Activated T-helper 1 cell treated with anti-CD3 and anti-CD28 coated beads, Interleukin-12 subunit alpha, Interleukin-12 subunit beta, Interleukin-2, Interleukin-4 antibody, amounts not matched to agents 30 ng/mL and 10 ng/mL and 1 ng/mL, durations not matched to agents 14 hours and 24 hours and 36 hours (primary cell): ENCODE measurements at regions of chr17 and their contacts with region 1.

Region 1: GRCh38 chr17:75024686-75025397 is 12.4 kb downstream of the MRPL58 start:
- DNase-seq: no peak
- H3K4me3 Mint-ChIP-seq: peak overlapping the region; percentile 41
- H3K27ac Mint-ChIP-seq: no peak overlapping the region
- H3K4me1 Mint-ChIP-seq: no peaks in the 10 kb centered on the region
- H3K27me3 Mint-ChIP-seq: no peaks in the 10 kb centered on the region

Region 2: GRCh38 chr17:74815550-74816370 is 209.1 kb before region 1 on chr17:
- intact Hi-C with region 1: no loop called
- DNase-seq: no peak
- H3K4me3 Mint-ChIP-seq: no peak overlapping the region
- H3K27ac Mint-ChIP-seq: no peak overlapping the region
- H3K4me1 Mint-ChIP-seq: no peaks in the 10 kb centered on the region
- H3K27me3 Mint-ChIP-seq: no peaks in the 10 kb centered on the region

Region 3: DNA sequence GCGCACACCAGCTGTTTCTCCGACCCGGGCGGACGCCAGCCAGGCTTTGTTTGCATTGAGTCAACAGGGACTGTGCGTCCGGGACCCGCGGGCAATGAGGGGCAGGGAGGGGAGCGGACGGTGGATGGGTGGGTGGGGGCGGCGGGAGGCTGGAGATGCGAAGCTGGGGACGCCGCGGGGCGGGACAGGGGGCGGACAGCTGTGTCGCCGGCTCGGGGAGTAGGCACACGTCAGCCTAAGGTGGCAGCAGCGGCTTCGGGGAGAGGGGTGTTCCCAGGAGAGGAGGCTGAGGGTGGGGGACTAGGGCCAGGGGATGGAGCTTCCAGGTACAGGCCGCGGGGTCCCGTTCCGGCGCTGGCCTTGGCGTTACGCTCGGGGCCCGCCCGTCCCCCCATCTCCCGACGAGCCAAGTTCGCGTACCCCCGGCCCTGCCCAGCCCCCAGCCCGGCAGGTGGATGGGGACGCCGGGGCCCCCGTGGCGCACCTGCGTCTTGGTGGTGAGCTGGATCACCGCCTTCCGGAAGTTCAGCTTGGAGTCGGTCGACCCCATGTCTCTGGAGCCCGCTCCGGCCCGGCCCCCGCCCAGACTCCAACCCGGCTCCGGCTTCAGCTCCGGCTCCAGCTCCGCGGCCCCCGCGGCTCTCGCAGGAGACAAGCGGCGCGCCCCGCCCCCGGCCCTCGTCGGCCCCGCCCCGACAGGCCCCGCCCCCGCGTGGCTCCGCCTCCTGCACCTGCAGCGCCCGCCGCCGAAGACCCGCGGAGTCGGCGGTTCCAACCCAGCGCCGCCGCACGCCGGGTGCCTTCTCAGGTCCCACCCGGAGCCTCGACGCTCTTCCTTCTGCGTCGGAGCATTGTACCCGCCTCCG is 52.5 kb before region 1 on chr17 and contains the start of gene HID1:
- intact Hi-C with region 1: loop called (anchors 2 kb)
- DNase-seq: peak; percentile 54
- H3K4me3 Mint-ChIP-seq: peak within 1 kb of the TSS; percentile 80
- H3K27ac Mint-ChIP-seq: peak within 1 kb of the TSS; percentile 31
- H3K4me1 Mint-ChIP-seq: peaks cover 6% of the 10 kb centered on the region
- H3K27me3 Mint-ChIP-seq: peaks cover 52% of the 10 kb centered on the region
- total RNA-seq, gene HID1: 0.29 and 0.31 TPM in 2 replicates

Region 4: DNA sequence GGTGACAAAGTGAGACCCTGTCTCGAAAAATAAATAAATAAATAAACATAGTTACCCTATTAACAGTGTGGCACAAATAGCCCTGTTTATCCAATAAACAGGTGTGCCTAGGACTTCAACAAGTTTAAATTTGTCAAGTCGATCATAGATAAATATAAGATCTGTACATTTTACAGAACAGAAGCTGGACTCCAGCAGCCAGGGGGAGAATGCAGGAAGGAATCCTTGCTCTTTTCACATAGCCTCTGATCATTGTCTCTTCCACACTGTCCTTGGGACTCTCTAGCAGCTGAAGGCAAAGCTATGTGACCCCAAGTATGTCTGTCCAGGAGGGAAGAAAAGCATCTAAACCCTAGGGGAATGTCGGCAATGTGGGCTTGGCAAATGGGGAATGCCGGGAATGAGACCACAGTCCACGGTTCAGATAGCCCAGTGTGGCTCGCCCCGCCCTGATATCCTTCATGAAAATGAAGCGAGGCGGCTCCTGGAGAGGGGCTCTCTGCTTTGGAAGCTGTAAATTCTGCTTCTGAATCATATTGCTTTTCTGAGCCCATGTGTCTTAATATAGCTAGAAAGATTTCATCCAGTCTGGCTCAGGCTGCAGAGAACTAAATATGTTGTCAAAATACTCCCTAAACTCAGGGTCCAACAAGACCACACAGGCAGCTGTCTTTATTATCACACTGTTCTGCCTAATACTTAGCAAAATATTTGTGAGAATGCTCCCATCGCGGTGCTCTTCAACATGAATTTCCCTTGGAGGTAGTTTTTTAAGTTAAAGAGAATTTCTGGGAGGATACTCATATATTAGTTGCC is 405.5 kb after region 1 on chr17:
- intact Hi-C with region 1: no loop called
- DNase-seq: no peak
- H3K4me3 Mint-ChIP-seq: no peak overlapping the region
- H3K27ac Mint-ChIP-seq: no peak overlapping the region
- H3K4me1 Mint-ChIP-seq: peaks cover 9% of the 10 kb centered on the region
- H3K27me3 Mint-ChIP-seq: peaks cover 20% of the 10 kb centered on the region